Caco-2 (cell line): ENCODE measurements at regions of chr7 and their contacts with region 1.

Region 1: GRCh38 chr7:91880413-91881241 is at the start of gene MTERF1:
- DNase-seq: peak; percentile 94 to 96
- H3K4me3 ChIP-seq: peak within 1 kb of the TSS; percentile 51
- H3K4me3 Mint-ChIP-seq: peak within 1 kb of the TSS; percentile 90
- H3K27ac Mint-ChIP-seq: peak within 1 kb of the TSS; percentile 86
- H3K4me1 ChIP-seq: no peaks in the 10 kb centered on the region
- H3K4me1 Mint-ChIP-seq: no peaks in the 10 kb centered on the region
- H3K27me3 ChIP-seq: no peaks in the 10 kb centered on the region
- H3K27me3 Mint-ChIP-seq: no peaks in the 10 kb centered on the region
- CTCF ChIP-seq: peak; percentile 97 to 100
- total RNA-seq, gene MTERF1: 16.2 and 16.9 TPM in 2 replicates

Region 2: DNA sequence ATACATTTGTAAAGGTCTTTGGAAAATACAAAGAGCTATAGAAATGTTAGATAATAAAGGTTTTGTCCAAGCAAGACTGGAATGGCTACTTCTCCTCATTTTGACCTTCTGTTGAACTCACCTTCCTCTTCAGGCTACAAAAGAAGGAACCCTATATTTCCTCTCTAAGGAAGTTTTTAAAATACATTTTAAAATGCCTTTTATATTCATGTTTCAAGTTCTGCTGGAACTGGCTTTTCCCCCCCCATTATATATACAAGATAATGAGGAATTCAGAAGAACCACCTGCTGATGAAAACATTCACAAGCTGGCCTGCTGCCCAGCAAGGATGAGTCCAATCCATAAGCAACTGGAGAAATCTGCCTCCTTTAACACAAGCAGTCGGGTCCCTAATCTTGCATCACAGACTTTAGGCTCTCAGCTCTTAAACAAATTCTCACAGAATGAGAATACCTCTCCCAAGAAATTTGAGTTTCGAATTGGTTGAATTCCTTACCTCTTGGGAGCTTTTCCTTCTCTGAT is 44.7 kb before region 1 on chr7:
- CTCF ChIA-PET with region 1: interaction called, 7 read pairs
- POLR2A ChIA-PET with region 1: no interaction called
- intact Hi-C with region 1: loop called (anchors 2 kb)
- DNase-seq: no peak
- H3K4me3 ChIP-seq: no peak overlapping the region
- H3K4me3 Mint-ChIP-seq: no peak overlapping the region
- H3K27ac Mint-ChIP-seq: no peak overlapping the region
- H3K4me1 ChIP-seq: no peaks in the 10 kb centered on the region
- H3K4me1 Mint-ChIP-seq: no peaks in the 10 kb centered on the region
- H3K27me3 ChIP-seq: no peaks in the 10 kb centered on the region
- H3K27me3 Mint-ChIP-seq: peaks cover 6% of the 10 kb centered on the region
- CTCF ChIP-seq: no peak

Region 3: DNA sequence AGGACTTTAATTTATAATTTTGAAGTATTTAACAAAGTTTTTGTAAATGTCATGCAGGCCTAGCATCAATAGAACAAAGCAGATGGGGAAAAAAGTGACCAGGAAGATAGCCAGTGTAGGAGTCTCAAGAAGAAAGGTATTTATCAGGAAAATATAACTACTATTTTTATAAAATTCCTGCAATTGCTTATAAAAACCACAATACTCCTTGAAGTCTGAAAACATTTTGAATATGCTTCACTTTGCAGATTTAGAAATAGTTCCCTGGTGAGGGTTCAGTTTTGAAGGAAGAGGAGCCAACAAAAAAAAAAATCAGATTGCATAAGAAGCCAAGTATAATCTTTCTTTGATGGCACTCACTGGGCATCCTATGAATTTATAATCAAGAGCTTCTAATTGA is 34.2 kb before region 1 on chr7:
- CTCF ChIA-PET with region 1: no interaction called
- POLR2A ChIA-PET with region 1: no interaction called
- intact Hi-C with region 1: no loop called
- DNase-seq: no peak
- H3K4me3 ChIP-seq: no peak overlapping the region
- H3K4me3 Mint-ChIP-seq: no peak overlapping the region
- H3K27ac Mint-ChIP-seq: no peak overlapping the region
- H3K4me1 ChIP-seq: no peaks in the 10 kb centered on the region
- H3K4me1 Mint-ChIP-seq: peaks cover 6% of the 10 kb centered on the region
- H3K27me3 ChIP-seq: no peaks in the 10 kb centered on the region
- H3K27me3 Mint-ChIP-seq: no peaks in the 10 kb centered on the region
- CTCF ChIP-seq: no peak

Region 4: GRCh38 chr7:91953618-91954017 is 73.0 kb after region 1 on chr7:
- CTCF ChIA-PET with region 1: interaction called, 4 read pairs
- POLR2A ChIA-PET with region 1: no interaction called
- intact Hi-C with region 1: loop called (anchors 1 kb)
- DNase-seq: no peak
- H3K4me3 ChIP-seq: no peak overlapping the region
- H3K4me3 Mint-ChIP-seq: no peak overlapping the region
- H3K27ac Mint-ChIP-seq: no peak overlapping the region
- H3K4me1 ChIP-seq: peaks cover 5% of the 10 kb centered on the region; the same call in 1 of the 2 replicates
- H3K4me1 Mint-ChIP-seq: peaks cover 18% of the 10 kb centered on the region
- H3K27me3 ChIP-seq: no peaks in the 10 kb centered on the region
- H3K27me3 Mint-ChIP-seq: no peaks in the 10 kb centered on the region
- CTCF ChIP-seq: peak; percentile 27 to 28

Region 5: GRCh38 chr7:91973639-91974038 is 93.0 kb after region 1 on chr7:
- CTCF ChIA-PET with region 1: no interaction called
- POLR2A ChIA-PET with region 1: no interaction called
- intact Hi-C with region 1: no loop called
- DNase-seq: no peak
- H3K4me3 ChIP-seq: no peak overlapping the region
- H3K4me3 Mint-ChIP-seq: no peak overlapping the region
- H3K27ac Mint-ChIP-seq: no peak overlapping the region
- H3K4me1 ChIP-seq: 0 out of 2 replicates have a peak, but pooled peaks cover 7% of the 10 kb centered on the region
- H3K4me1 Mint-ChIP-seq: peaks cover 17% of the 10 kb centered on the region
- H3K27me3 ChIP-seq: no peaks in the 10 kb centered on the region
- H3K27me3 Mint-ChIP-seq: no peaks in the 10 kb centered on the region
- CTCF ChIP-seq: no peak

Region 6: GRCh38 chr7:92057362-92057761 is 176.7 kb after region 1 on chr7:
- CTCF ChIA-PET with region 1: interaction called, 3 read pairs
- POLR2A ChIA-PET with region 1: no interaction called
- intact Hi-C with region 1: loop called (anchors 2 kb)
- DNase-seq: peak; percentile 74 to 78
- H3K4me3 ChIP-seq: no peak overlapping the region
- H3K4me3 Mint-ChIP-seq: peak overlapping the region; percentile 49
- H3K27ac Mint-ChIP-seq: peak overlapping the region; percentile 55
- H3K4me1 ChIP-seq: peaks cover 51% of the 10 kb centered on the region
- H3K4me1 Mint-ChIP-seq: peaks cover 16% of the 10 kb centered on the region
- H3K27me3 ChIP-seq: no peaks in the 10 kb centered on the region
- H3K27me3 Mint-ChIP-seq: no peaks in the 10 kb centered on the region
- CTCF ChIP-seq: no peak

Region 7: GRCh38 chr7:92461027-92462003 is 580.7 kb after region 1 on chr7:
- CTCF ChIA-PET with region 1: no interaction called
- POLR2A ChIA-PET with region 1: no interaction called
- intact Hi-C with region 1: loop called (anchors 5 kb)
- DNase-seq: peak in 1 of 2 experiments; percentile 45
- H3K4me3 ChIP-seq: no peak overlapping the region
- H3K4me3 Mint-ChIP-seq: no peak overlapping the region
- H3K27ac Mint-ChIP-seq: no peak overlapping the region
- H3K4me1 ChIP-seq: peaks cover 14% of the 10 kb centered on the region
- H3K4me1 Mint-ChIP-seq: peaks cover 22% of the 10 kb centered on the region
- H3K27me3 ChIP-seq: no peaks in the 10 kb centered on the region
- H3K27me3 Mint-ChIP-seq: no peaks in the 10 kb centered on the region
- CTCF ChIP-seq: peak; percentile 73 to 87